ENCODE measurements at regions of chr22 and their contacts with region 1.

Region 1: DNA sequence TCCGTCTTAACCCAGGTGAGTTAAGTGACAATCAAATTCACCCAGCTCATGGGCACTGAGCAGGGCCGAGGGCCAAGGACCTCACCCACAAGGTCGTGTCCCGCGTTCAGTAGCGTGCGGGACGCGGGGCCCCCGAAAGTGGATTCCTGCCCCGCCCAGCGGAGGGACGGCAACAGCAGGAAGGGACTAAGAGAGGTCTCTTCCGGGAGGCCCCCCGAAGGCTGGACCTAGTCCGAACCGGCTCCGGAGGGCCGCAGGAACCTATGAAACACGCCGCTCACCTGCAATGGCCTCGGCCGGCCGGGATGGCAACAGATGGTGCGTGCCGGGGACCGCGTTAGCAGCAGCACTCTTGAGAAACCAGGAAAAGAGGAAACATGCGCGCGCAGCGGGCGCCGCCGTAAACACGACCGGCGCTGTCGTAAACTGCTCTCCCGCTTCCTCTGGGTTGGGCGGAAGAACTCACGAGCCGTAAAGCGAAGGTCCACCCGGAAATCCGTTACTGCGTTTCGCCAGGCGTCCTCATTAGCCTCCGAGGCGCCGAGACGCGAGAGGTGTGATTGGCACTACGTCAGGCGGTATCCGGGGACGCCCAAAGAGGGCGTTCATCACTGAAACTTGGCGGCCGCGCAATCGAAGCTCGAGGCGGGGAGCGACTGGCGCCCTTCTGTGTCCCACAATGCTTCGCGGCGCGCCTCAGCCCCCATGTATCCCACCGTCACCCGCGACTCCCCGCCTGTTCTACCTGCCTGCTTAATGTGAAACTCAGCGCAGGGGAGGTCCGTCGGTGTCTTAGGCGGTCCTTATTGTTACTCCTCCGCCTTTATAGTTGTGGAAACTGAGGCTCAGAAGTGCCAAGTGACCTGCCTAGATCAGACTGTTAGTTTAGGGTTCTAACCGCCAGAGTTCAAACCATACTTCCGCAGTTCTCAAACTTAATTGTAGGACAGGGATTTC is at the start of gene EIF3D:
- DNase-seq: peak; percentile 99
- H3K4me3 Mint-ChIP-seq: peak within 1 kb of the TSS; percentile 96
- H3K27ac Mint-ChIP-seq: peak within 1 kb of the TSS; percentile 99
- H3K4me1 Mint-ChIP-seq: peaks cover 24% of the 10 kb centered on the region
- H3K27me3 Mint-ChIP-seq: peaks cover 2% of the 10 kb centered on the region
- total RNA-seq, gene EIF3D: 322 and 323 TPM in 2 replicates

Region 2: GRCh38 chr22:36506637-36507517 is 22.2 kb before region 1 on chr22 and contains the start of gene FOXRED2:
- intact Hi-C with region 1: loop called (anchors 1 kb)
- DNase-seq: peak; percentile 92
- H3K4me3 Mint-ChIP-seq: peak within 1 kb of the TSS; percentile 74
- H3K27ac Mint-ChIP-seq: no peak within 1 kb of the TSS
- H3K4me1 Mint-ChIP-seq: peaks cover 19% of the 10 kb centered on the region
- H3K27me3 Mint-ChIP-seq: no peaks in the 10 kb centered on the region
- total RNA-seq, gene FOXRED2: 22.3 and 25.0 TPM in 2 replicates

Region 3: DNA sequence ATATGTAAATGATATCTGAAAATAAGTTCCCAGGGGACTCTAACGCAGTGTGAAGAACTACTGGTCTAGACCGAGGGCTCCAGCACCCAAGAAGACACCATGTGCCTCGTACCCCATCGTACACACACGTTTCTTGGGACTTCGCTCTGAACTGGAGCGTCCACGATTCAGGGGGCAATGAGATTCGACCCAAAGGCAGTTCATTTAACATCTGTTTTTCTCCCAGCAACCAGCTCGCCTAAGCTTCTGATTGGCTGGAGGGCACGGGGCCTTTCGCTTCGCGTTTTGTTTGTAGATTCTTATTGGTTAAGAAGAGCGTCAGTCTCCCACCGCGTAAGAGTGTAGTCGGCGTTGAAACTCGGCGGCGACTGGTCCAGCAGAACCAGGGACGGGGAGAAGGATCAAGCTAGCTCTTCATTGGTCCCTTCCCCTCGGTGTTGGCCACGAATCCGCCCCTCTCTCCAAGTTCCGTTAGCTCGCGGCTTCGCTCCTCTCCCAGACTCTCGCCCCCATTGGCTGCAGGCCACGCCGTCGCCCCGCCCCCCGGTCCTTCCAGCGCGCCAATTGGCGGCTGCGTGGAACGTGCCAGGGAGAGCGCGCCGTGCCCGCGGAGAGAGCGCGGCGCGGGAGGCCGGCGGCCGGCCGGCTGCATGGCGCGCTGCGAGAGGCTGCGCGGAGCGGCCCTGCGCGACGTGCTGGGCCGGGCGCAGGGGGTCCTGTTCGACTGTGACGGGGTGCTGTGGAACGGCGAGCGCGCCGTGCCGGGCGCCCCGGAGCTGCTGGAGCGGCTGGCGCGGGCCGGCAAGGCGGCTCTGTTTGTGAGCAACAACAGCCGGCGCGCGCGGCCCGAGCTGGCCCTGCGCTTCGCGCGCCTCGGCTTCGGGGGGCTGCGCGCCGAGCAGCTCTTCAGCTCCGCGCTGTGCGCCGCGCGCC is 1129.3 kb after region 1 on chr22 and contains the start of gene PDXP:
- intact Hi-C with region 1: loop called (anchors 2 kb)
- DNase-seq: peak; percentile 99
- H3K4me3 Mint-ChIP-seq: peak within 1 kb of the TSS; percentile 89
- H3K27ac Mint-ChIP-seq: peak within 1 kb of the TSS; percentile 91
- H3K4me1 Mint-ChIP-seq: peaks cover 43% of the 10 kb centered on the region
- H3K27me3 Mint-ChIP-seq: no peaks in the 10 kb centered on the region
- total RNA-seq, gene PDXP: 47.0 and 50.4 TPM in 2 replicates

Region 4: DNA sequence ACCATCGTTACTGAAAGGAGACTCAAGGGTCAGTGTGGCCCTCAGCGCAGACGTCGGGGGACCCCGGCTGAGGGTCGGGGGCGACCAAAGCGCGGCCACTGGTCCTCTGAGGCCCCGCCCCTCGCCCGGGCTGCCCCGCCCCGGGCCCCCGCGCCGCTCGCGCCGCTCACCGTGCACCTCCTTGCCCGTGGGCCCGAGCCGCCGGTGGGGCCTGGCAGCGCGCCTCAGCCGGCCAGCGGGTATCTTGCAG is 1314.6 kb after region 1 on chr22:
- intact Hi-C with region 1: loop called (anchors 5 kb)
- DNase-seq: no peak
- H3K4me3 Mint-ChIP-seq: peak overlapping the region; percentile 90
- H3K27ac Mint-ChIP-seq: peak overlapping the region; percentile 95
- H3K4me1 Mint-ChIP-seq: peaks cover 22% of the 10 kb centered on the region
- H3K27me3 Mint-ChIP-seq: no peaks in the 10 kb centered on the region